Sigmoid colon (tissue), 7 donors: ENCODE measurements at regions of chr11 and their contacts with region 1.

Region 1: DNA sequence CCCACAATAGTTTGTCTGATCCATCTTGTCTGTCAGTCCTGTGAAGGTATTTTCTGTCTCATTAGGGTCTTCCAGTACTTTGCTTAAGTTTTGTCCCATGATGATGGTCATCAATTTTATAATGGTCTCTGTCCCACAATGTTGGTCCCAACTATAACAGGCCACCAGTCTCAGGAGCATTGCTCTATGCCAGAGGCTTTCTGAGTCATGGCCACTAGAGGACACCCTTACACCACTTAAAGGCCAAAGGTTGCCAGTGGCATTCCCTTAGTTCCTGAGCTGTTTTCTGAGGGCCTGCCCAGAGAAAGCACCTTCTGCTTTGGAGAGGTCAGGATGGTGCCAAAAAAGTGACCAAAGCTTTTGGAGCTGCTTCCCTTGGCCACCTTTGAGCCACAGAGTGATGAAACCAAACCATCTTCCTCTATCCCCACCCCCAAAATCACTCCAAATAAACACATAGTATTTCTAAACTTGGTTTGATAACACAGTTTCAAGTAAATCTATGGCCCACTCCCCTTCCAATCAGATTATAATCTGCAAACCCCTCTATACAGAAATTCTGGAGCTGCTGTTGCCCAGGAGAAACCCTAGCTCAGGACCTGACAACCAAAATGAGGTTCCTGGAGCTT is 19.3 kb downstream of the EIF3F start:
- DNase-seq: peak; percentile 74
- H3K4me3 ChIP-seq: no peak overlapping the region
- H3K27ac ChIP-seq: no peak overlapping the region
- H3K4me1 ChIP-seq: no peaks in the 10 kb centered on the region
- H3K27me3 ChIP-seq: no peaks in the 10 kb centered on the region
- CTCF ChIP-seq: peak; percentile 56 to 79 (median 70)
- EP300 ChIP-seq: no peak
- POLR2A ChIP-seq: no peak

Region 2: GRCh38 chr11:8033305-8034105 is 27.0 kb after region 1 on chr11:
- intact Hi-C with region 1: loop called (anchors 1 kb)
- DNase-seq: peak; percentile 92
- H3K4me3 ChIP-seq: no peak overlapping the region
- H3K27ac ChIP-seq: no peak overlapping the region
- H3K4me1 ChIP-seq: peaks cover 0 to 11% (median 10%) of the 10 kb centered on the region in 4 donors
- H3K27me3 ChIP-seq: no peaks in the 10 kb centered on the region
- CTCF ChIP-seq: peak; percentile 71 to 95 (median 92)
- EP300 ChIP-seq: no peak
- POLR2A ChIP-seq: no peak

Region 3: GRCh38 chr11:8090756-8091155 is 84.3 kb after region 1 on chr11:
- intact Hi-C with region 1: loop called (anchors 2 kb)
- DNase-seq: peak; percentile 62
- H3K4me3 ChIP-seq: no peak overlapping the region
- H3K27ac ChIP-seq: no peak overlapping the region
- H3K4me1 ChIP-seq: peaks cover 0 to 15% (median 7%) of the 10 kb centered on the region in 4 donors
- H3K27me3 ChIP-seq: no peaks in the 10 kb centered on the region
- CTCF ChIP-seq: peak in 3 of 4 experiments; percentile 5 to 60 (median 45)
- EP300 ChIP-seq: no peak
- POLR2A ChIP-seq: no peak

Region 4: DNA sequence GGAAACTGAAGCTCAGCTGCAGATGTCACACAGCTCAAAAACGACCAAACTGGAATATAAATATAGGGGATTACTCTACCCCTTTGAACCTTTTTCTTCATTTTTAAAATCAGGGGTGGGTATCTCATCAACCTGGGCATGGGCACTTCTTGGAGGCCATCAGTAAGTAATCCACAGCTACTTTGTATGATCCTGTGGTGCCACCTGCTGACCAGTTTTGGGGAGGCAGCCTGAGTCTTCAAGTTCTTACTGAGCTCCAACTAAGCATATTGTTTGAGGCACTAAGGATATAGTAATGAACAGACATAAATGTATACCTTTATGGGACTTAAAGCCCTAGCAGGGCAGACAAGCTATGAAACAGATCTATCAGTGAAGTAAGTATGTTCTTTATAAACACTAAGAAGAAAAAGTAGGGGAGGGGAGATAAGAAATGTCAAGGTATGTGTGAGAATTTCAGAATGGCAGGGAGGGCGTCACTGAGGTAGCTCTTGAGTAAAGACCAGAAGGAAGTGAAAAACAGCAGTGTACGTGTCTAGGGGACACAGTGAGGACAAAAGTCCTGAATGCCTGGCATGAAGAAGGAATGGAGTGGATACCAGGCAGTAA is 92.9 kb after region 1 on chr11:
- intact Hi-C with region 1: loop called (anchors 2 kb)
- DNase-seq: peak; percentile 85
- H3K4me3 ChIP-seq: no peak overlapping the region
- H3K27ac ChIP-seq: no peak overlapping the region
- H3K4me1 ChIP-seq: no peaks in the 10 kb centered on the region
- H3K27me3 ChIP-seq: no peaks in the 10 kb centered on the region
- CTCF ChIP-seq: peak; percentile 30 to 79 (median 68)
- EP300 ChIP-seq: no peak
- POLR2A ChIP-seq: no peak

Region 5: DNA sequence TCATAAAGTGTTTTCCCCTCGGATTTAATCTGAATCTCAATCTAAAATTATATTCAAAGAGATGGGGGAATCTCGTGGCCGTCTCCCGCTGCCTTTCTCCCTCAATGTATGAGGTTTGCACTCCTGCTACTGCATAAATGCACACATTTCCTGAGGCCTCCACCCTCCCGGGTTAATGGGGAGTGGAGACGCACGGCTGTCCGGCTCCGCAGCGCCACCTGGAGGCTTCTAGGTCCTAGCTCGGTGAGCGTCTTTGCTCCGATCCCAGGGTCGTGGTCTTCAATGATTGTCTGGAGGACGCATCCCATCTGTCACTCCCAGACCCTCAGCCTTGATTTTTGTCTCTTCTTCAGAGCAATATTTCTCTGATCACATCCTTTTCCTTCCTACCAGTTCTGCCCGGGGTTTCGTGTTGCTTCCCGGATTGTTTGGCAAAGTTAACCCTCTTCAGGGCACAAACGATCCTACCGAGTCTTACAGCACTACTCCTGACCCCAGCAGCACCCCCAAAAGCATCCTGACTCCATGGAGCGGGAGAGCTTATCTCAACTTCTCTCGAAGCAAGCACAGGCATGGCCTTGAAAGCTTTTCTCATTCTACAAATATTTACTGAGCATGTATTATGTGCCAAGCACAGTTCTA is 257.4 kb after region 1 on chr11 and contains the start of gene LMO1:
- intact Hi-C with region 1: loop called (anchors 10 kb)
- DNase-seq: peak; percentile 87
- H3K4me3 ChIP-seq: peak within 1 kb of the TSS; percentile 28 to 57 (median 52)
- H3K27ac ChIP-seq: peak within 1 kb of the TSS in 3 of 4 donors; percentile 19 to 63 (median 22)
- H3K4me1 ChIP-seq: peaks cover 0 to 37% (median 31%) of the 10 kb centered on the region in 4 donors
- H3K27me3 ChIP-seq: peaks cover 12 to 46% (median 43%) of the 10 kb centered on the region in 3 donors
- CTCF ChIP-seq: peak; percentile 39 to 85 (median 66)
- EP300 ChIP-seq: no peak
- POLR2A ChIP-seq: no peak
- total RNA-seq, gene LMO1: 0.66 to 1.8 TPM in 2 of 4 donors, not detected in the others